Common myeloid progenitor, CD34-positive (primary cell): ENCODE measurements at regions of chr3 and their contacts with region 1.

Region 1: GRCh38 chr3:61858056-61858455 is 296.7 kb downstream of the PTPRG start:
- DNase-seq: peak; percentile 16 to 19 (median 18)
- H3K4me3 ChIP-seq: no peak overlapping the region
- H3K27ac ChIP-seq: no peak overlapping the region
- H3K4me1 ChIP-seq: no peaks in the 10 kb centered on the region
- H3K27me3 ChIP-seq: no peaks in the 10 kb centered on the region

Region 2: GRCh38 chr3:61340931-61341461 is 517.1 kb before region 1 on chr3:
- CTCF ChIA-PET with region 1: no interaction called
- POLR2A ChIA-PET with region 1: no interaction called
- DNase-seq: no peak
- H3K4me3 ChIP-seq: no peak overlapping the region
- H3K27ac ChIP-seq: no peak overlapping the region
- H3K4me1 ChIP-seq: no peaks in the 10 kb centered on the region
- H3K27me3 ChIP-seq: no peaks in the 10 kb centered on the region

Region 3: DNA sequence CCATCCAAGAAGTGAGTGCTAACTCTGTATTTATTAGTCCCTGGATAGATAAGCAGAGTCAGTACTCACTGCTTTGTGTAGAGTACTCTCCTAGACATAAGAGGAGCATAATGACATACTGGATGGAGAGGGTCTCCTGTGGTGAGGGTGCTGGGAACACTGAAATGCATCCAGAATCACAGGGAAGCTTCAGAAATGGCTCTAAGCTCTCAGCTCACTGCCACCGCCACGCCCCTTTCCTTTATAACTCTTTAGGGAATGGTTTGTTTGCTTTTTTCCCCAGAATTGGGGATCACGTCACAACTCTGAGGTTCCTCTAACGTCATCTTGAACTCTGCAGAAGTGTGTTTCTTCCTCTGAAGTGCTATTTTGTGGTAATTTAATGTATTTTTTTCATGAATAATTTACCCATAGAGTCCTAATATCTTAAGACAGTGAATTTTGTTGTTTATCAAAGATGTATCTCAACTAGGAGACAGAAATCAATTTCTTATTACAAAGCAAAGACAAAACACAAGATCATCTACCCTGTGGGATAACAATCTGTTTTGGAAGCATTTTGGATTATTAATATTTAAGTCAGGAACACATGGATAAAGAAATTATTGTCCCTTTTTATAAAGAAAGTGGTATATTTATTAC is 142.0 kb before region 1 on chr3:
- CTCF ChIA-PET with region 1: no interaction called
- POLR2A ChIA-PET with region 1: no interaction called
- DNase-seq: no peak
- H3K4me3 ChIP-seq: no peak overlapping the region
- H3K27ac ChIP-seq: no peak overlapping the region
- H3K4me1 ChIP-seq: no peaks in the 10 kb centered on the region
- H3K27me3 ChIP-seq: no peaks in the 10 kb centered on the region

Region 4: DNA sequence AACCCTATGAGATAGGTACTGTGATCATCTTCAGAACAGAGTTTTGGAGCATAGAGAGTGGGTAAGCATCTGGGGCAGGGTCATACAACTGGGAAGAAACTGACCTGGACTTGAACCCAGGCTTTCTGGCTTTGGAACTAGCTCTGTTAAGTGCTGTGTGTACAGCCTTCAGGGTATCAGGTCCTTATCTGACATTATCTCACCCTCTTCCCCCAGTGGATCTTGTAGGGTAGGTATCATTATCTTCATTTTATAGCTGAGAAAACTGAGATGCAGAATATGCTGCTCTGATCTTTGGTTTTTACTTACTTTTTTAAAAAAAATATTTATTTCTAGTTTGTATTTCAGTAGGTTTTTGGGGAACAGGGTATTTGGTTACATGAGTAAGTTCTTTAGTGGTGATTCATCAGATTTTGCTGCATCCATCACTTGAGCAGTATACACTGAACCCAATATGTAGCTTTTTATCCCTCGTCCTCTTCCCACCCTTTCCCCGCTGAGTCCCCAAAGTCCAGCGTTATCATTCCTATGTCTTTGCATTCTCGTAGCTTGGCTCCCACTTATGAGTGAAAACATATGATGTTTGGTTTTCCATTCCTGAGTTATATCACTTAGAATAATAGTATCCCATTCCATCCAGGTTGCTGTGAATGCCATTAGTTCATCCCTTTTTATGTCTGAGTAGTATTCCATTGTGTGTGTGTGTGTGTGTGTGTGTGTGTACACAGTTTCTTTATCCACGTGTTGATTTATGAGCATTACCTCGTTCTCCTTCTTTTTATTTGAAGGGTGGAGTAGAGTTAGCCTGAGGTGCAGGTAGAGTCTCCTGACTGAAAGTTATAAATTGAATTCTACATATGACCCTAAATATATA is 25.4 kb before region 1 on chr3:
- CTCF ChIA-PET with region 1: no interaction called
- POLR2A ChIA-PET with region 1: no interaction called
- DNase-seq: no peak
- H3K4me3 ChIP-seq: no peak overlapping the region
- H3K27ac ChIP-seq: no peak overlapping the region
- H3K4me1 ChIP-seq: no peaks in the 10 kb centered on the region
- H3K27me3 ChIP-seq: no peaks in the 10 kb centered on the region

Region 5: DNA sequence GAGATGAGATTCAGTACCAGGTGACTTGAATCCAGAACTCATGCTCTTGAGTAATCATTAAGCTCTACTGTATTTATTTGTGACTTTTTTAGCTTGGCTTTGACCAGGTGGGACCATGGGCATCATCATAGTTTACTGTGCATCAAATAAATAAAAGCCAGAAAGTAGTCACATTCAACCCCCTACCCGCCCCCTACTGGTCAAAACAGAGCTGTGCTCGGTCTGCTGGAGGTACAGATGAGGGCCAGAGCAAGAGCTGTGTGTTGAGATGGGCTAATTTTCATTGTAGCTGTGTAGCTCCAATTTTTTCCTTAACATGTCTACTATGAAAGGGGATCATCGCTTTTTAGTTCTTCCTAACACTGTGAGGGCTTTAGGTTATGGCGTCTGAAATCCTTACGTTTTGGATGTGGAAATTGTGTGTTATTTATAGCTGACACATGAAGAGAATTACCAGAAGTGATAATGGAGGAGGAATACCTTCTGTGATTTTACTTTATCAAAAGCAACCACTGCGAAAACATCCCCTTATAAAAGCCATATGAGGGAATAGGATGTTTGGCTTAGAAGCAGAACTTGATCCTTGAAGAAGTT is 78.4 kb after region 1 on chr3:
- CTCF ChIA-PET with region 1: interaction called, 21 read pairs
- POLR2A ChIA-PET with region 1: no interaction called
- DNase-seq: peak; percentile 10 to 30 (median 28)
- H3K4me3 ChIP-seq: no peak overlapping the region
- H3K27ac ChIP-seq: no peak overlapping the region
- H3K4me1 ChIP-seq: no peaks in the 10 kb centered on the region
- H3K27me3 ChIP-seq: peaks cover 0 to 4% (median 0%) of the 10 kb centered on the region in 5 experiments

Region 6: GRCh38 chr3:62188681-62189383 is 330.8 kb after region 1 on chr3:
- CTCF ChIA-PET with region 1: interaction called, 24 read pairs
- POLR2A ChIA-PET with region 1: no interaction called
- DNase-seq: peak; percentile 68 to 82 (median 81)
- H3K4me3 ChIP-seq: peak overlapping the region in 3 of 7 experiments; percentile 34 to 56 (median 50)
- H3K27ac ChIP-seq: no peak overlapping the region
- H3K4me1 ChIP-seq: peaks cover 0 to 3% (median 0%) of the 10 kb centered on the region in 4 experiments
- H3K27me3 ChIP-seq: peaks cover 0 to 2% (median 0%) of the 10 kb centered on the region in 5 experiments